ENCODE measurements at regions of chr20 and their contacts with region 1.

Region 1: DNA sequence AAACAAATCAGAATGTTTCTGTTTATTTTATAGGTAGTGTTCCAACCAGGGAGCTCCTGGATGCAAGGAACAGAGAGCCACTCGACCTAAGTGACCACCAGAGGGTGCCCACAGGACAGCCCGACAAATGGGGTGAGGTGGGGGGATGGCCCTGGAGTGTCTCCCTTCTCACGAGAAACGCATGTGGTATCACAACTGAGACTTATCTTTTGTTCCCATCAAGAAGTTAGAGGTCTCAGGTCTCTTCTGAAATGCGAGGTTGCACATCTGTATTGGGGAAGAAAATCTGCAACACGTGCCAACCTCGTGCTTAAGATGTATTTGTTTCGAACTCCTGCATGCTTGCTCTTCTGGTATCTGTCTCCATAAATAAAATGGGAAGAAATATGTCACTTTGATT is 104.0 kb downstream of the ISM1 start:
- DNase-seq: no peak
- H3K4me3 Mint-ChIP-seq: no peak overlapping the region
- H3K27ac Mint-ChIP-seq: peak overlapping the region; percentile 30
- H3K4me1 Mint-ChIP-seq: peaks cover 11% of the 10 kb centered on the region
- H3K27me3 Mint-ChIP-seq: no peaks in the 10 kb centered on the region

Region 2: GRCh38 chr20:13312300-13312699 is 12.7 kb before region 1 on chr20:
- intact Hi-C with region 1: loop called (anchors 1 kb)
- DNase-seq: no peak
- H3K4me3 Mint-ChIP-seq: no peak overlapping the region
- H3K27ac Mint-ChIP-seq: peak overlapping the region; percentile 14
- H3K4me1 Mint-ChIP-seq: peaks cover 16% of the 10 kb centered on the region
- H3K27me3 Mint-ChIP-seq: peaks cover 4% of the 10 kb centered on the region

Region 3: DNA sequence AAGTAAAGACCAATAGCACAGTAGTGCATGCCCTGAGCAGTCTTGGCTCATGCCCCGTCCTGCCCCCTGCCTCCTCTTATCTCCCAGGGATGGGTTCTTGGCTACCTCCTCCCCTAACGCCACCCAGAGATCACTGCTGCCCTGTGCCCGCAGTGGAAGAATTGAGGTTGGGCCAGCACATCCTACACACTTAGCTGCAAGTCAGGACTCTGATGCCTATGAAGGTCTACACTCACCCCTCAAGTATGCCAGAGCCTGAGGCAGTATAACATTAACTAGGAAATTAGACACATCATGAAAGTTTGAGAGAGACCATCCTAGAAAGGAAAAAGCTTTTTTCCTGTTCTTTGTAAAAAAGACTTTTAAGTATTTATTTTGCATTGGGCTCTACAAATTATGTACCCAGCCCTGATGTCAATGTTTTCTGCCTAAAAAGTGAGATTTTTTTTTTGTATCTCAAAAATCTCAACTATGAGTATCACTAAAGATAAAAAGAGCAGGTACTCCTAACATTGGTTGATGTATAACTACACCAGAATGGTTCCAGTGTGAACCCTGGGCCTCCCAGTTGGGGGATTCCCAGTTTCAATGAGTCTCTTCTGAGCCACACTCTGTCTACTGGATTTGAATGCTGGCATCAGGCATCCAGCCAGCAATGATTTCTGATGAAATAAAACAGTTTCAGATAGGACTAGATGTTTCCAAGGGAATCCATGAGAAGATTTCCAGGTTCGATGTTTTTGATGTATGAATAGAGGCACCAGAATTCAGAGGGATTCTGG is 11.5 kb after region 1 on chr20:
- intact Hi-C with region 1: loop called (anchors 2 kb)
- DNase-seq: no peak
- H3K4me3 Mint-ChIP-seq: no peak overlapping the region
- H3K27ac Mint-ChIP-seq: peak overlapping the region; percentile 75
- H3K4me1 Mint-ChIP-seq: peaks cover 29% of the 10 kb centered on the region
- H3K27me3 Mint-ChIP-seq: no peaks in the 10 kb centered on the region

Region 4: GRCh38 chr20:13546497-13547131 is 221.6 kb after region 1 on chr20:
- intact Hi-C with region 1: loop called (anchors 5 kb)
- DNase-seq: peak; percentile 90
- H3K4me3 Mint-ChIP-seq: no peak overlapping the region
- H3K27ac Mint-ChIP-seq: no peak overlapping the region
- H3K4me1 Mint-ChIP-seq: peaks cover 2% of the 10 kb centered on the region
- H3K27me3 Mint-ChIP-seq: no peaks in the 10 kb centered on the region